A549 (cell line): ENCODE measurements at regions of chr12 and their contacts with region 1.

Region 1: GRCh38 chr12:62813031-62813829 is 121.7 kb downstream of the PPM1H start:
- DNase-seq: peak; percentile 58 to 83
- ATAC-seq: peak; percentile 92 to 95
- H3K4me3 ChIP-seq: no peak overlapping the region; the same call in 2 of the 3 replicates
- H3K27ac ChIP-seq: peak overlapping the region; percentile 51 to 76; a peak in 5 of 6 replicates
- H3K4me1 ChIP-seq: peaks cover 5% of the 10 kb centered on the region; the same call in 2 of the 3 replicates
- CTCF ChIP-seq: peak; percentile 89
- EP300 ChIP-seq: no peak
- POLR2A ChIP-seq: no peak
- RAD21 ChIP-seq: peak; percentile 89 to 93

Region 2: GRCh38 chr12:62581288-62582064 is 231.8 kb before region 1 on chr12:
- CTCF ChIA-PET with region 1: interaction called, 18 read pairs
- POLR2A ChIA-PET with region 1: no interaction called
- DNase-seq: peak; percentile 40 to 74
- ATAC-seq: peak; percentile 85 to 94
- H3K4me3 ChIP-seq: no peak overlapping the region
- H3K27ac ChIP-seq: peak overlapping the region; percentile 20 to 77
- H3K4me1 ChIP-seq: peaks cover 27% of the 10 kb centered on the region
- CTCF ChIP-seq: peak; percentile 83
- EP300 ChIP-seq: no peak
- POLR2A ChIP-seq: no peak
- RAD21 ChIP-seq: peak; percentile 88 to 90

Region 3: DNA sequence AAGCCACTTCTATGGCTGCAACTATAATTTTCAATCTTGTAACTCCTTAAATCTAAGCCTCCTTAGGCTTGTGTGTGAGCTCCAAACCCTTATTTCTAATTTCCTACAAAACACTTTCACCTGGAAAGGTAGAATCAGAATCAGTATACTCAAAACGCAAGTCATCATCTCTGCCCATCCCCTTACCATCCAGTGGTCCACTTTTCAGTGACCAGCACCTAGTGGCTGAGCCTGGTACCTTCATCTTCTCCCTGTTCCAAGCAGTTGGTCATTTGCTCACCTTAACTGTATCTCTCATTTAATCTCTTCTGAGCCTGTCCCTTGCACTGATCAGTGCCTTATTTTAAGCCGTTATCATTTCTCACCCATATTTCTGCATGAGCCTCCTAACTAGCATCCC is 13.8 kb after region 1 on chr12:
- CTCF ChIA-PET with region 1: interaction called, 10 read pairs
- POLR2A ChIA-PET with region 1: no interaction called
- DNase-seq: peak in 1 of 2 experiments; percentile 30
- ATAC-seq: peak; percentile 56 to 84; a peak in 5 of 6 replicates
- H3K4me3 ChIP-seq: no peak overlapping the region
- H3K27ac ChIP-seq: no peak overlapping the region
- H3K4me1 ChIP-seq: no peaks in the 10 kb centered on the region
- CTCF ChIP-seq: no peak
- EP300 ChIP-seq: no peak
- POLR2A ChIP-seq: no peak
- RAD21 ChIP-seq: 0 out of 5 replicates have a peak, but pooled peaks of 1 of the 2 experiments have one; percentile 11

Region 4: GRCh38 chr12:62866451-62867082 is 53.3 kb after region 1 on chr12:
- CTCF ChIA-PET with region 1: interaction called, 14 read pairs
- POLR2A ChIA-PET with region 1: no interaction called
- DNase-seq: peak; percentile 58 to 85
- ATAC-seq: peak; percentile 91 to 93
- H3K4me3 ChIP-seq: no peak overlapping the region
- H3K27ac ChIP-seq: peak overlapping the region; percentile 72 to 84
- H3K4me1 ChIP-seq: peaks cover 68% of the 10 kb centered on the region
- CTCF ChIP-seq: no peak
- EP300 ChIP-seq: no peak; a peak in 1 of 5 replicates
- POLR2A ChIP-seq: no peak
- RAD21 ChIP-seq: 0 out of 5 replicates have a peak, but pooled peaks have one; percentile 11 to 17

Region 5: DNA sequence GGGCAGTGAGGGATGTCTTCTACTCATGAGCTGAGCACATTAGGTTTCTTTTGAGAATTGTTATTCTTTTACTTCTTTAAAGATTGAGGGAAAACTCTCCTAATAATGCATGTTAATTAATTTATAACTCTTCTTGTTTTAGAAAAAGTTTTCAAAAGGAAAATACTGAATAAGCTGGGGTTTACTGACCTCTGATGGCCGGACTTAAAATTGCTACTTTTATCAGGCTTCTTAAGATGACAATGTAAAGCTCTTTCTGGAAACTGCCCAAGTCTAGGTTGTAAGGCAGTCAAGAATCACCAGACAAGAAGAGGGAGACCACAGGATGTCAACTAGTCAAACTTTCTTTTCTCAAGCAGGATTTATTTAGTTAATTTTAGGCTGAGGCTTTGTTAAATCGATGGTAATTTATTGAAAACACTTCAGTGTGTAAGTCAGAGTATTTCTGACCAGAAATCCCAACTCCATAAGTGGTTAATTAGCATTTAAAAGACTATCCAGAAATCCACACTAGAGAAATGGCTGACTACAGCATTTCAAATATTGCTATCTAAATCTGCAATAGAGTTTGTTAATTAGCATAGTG is 255.7 kb after region 1 on chr12:
- CTCF ChIA-PET with region 1: interaction called, 24 read pairs
- POLR2A ChIA-PET with region 1: no interaction called
- DNase-seq: peak; percentile 14 to 71
- ATAC-seq: peak; percentile 63 to 83; a peak in 3 of 6 replicates
- H3K4me3 ChIP-seq: no peak overlapping the region
- H3K27ac ChIP-seq: no peak overlapping the region
- H3K4me1 ChIP-seq: no peaks in the 10 kb centered on the region
- CTCF ChIP-seq: peak; percentile 84
- EP300 ChIP-seq: no peak
- POLR2A ChIP-seq: no peak
- RAD21 ChIP-seq: peak; percentile 84 to 86